ENCODE measurements at regions of chr11 and their contacts with region 1.

Region 1: DNA sequence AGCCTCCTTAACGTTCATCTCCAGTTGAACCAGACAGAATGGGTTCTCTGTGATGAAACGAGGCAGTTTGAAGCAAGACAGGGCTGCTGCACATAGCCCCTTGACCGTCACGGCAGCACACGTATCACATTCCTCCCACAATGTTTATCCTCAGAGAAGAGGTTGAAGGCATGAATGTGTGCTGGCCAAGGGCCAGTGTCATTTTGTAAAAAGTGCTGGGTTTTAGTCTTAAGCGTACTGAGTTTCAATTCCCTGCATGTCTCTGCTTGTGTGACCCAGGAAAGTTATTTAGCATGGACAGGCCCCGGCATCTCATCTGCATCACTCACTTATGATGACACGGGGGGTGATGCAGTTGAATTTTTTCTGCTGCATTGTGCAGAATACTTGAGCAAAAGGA is 31.6 kb downstream of the TTC12 start:
- DNase-seq: peak; percentile 69
- H3K4me3 Mint-ChIP-seq: no peak overlapping the region
- H3K27ac Mint-ChIP-seq: no peak overlapping the region
- H3K4me1 Mint-ChIP-seq: no peaks in the 10 kb centered on the region
- H3K27me3 Mint-ChIP-seq: no peaks in the 10 kb centered on the region
- CTCF ChIP-seq: no peak

Region 2: GRCh38 chr11:113073290-113073953 is 272.6 kb before region 1 on chr11:
- CTCF ChIA-PET with region 1: no interaction called
- POLR2A ChIA-PET with region 1: no interaction called
- intact Hi-C with region 1: no loop called
- DNase-seq: no peak
- H3K4me3 Mint-ChIP-seq: no peak overlapping the region
- H3K27ac Mint-ChIP-seq: no peak overlapping the region
- H3K4me1 Mint-ChIP-seq: no peaks in the 10 kb centered on the region
- H3K27me3 Mint-ChIP-seq: no peaks in the 10 kb centered on the region
- CTCF ChIP-seq: no peak

Region 3: GRCh38 chr11:113376156-113376555 is 30.2 kb after region 1 on chr11:
- CTCF ChIA-PET with region 1: no interaction called
- POLR2A ChIA-PET with region 1: interaction called, 10 read pairs
- intact Hi-C with region 1: no loop called
- DNase-seq: no peak
- H3K4me3 Mint-ChIP-seq: no peak overlapping the region
- H3K27ac Mint-ChIP-seq: no peak overlapping the region
- H3K4me1 Mint-ChIP-seq: peaks cover 46% of the 10 kb centered on the region
- H3K27me3 Mint-ChIP-seq: no peaks in the 10 kb centered on the region
- CTCF ChIP-seq: no peak